MCF 10A (cell line): ENCODE measurements at regions of chr11 and their contacts with region 1.

Region 1: GRCh38 chr11:65817835-65818742 is 15.7 kb upstream of the SNX32 start:
- DNase-seq: peak; percentile 81
- H3K4me3 Mint-ChIP-seq: peak overlapping the region; percentile 80
- H3K27ac Mint-ChIP-seq: peak overlapping the region; percentile 78
- H3K4me1 Mint-ChIP-seq: peaks cover 4% of the 10 kb centered on the region
- H3K27me3 Mint-ChIP-seq: no peaks in the 10 kb centered on the region
- CTCF ChIP-seq: peak; percentile 99

Region 2: GRCh38 chr11:65652511-65653231 is 165.4 kb before region 1 on chr11:
- CTCF ChIA-PET with region 1: no interaction called
- POLR2A ChIA-PET with region 1: no interaction called
- intact Hi-C with region 1: no loop called
- DNase-seq: peak; percentile 89
- H3K4me3 Mint-ChIP-seq: peak overlapping the region; percentile 78
- H3K27ac Mint-ChIP-seq: peak overlapping the region; percentile 95
- H3K4me1 Mint-ChIP-seq: peaks cover 29% of the 10 kb centered on the region
- H3K27me3 Mint-ChIP-seq: no peaks in the 10 kb centered on the region
- CTCF ChIP-seq: no peak

Region 3: DNA sequence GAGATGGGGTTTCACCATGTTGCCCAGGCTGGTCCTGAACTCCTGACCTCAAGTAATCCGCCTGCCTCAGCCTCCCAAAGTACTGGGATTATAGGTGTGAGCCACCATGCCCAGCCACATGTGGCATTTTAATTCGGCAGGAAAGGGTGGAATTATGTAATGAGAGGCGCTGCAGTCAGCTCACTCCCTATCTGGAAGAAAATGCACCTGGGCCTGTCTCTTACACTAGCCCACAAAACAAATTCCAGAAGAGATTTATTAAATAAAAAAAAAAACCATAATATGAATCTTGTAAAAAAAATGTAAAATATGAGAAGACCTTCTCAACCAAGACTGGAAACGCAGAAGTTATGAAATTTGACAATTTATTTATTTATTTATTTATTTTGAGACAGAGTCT is 114.2 kb before region 1 on chr11:
- CTCF ChIA-PET with region 1: interaction called, 41 read pairs
- POLR2A ChIA-PET with region 1: no interaction called
- intact Hi-C with region 1: loop called (anchors 1 kb)
- DNase-seq: no peak
- H3K4me3 Mint-ChIP-seq: no peak overlapping the region
- H3K27ac Mint-ChIP-seq: no peak overlapping the region
- H3K4me1 Mint-ChIP-seq: no peaks in the 10 kb centered on the region
- H3K27me3 Mint-ChIP-seq: peaks cover 44% of the 10 kb centered on the region
- CTCF ChIP-seq: no peak

Region 4: GRCh38 chr11:65711785-65712632 is 106.1 kb before region 1 on chr11 and contains the start of gene KAT5:
- CTCF ChIA-PET with region 1: interaction called, 69 read pairs
- POLR2A ChIA-PET with region 1: interaction called, 42 read pairs
- intact Hi-C with region 1: loop called (anchors 1 kb)
- DNase-seq: peak; percentile 98
- H3K4me3 Mint-ChIP-seq: peak within 1 kb of the TSS; percentile 80
- H3K27ac Mint-ChIP-seq: peak within 1 kb of the TSS; percentile 99
- H3K4me1 Mint-ChIP-seq: no peaks in the 10 kb centered on the region
- H3K27me3 Mint-ChIP-seq: no peaks in the 10 kb centered on the region
- CTCF ChIP-seq: peak; percentile 95
- total RNA-seq, gene KAT5: 37.6 and 48.1 TPM in 2 replicates

Region 5: GRCh38 chr11:65720237-65720934 is 97.7 kb before region 1 on chr11 and contains the start of gene RNASEH2C:
- CTCF ChIA-PET with region 1: interaction called, 69 read pairs
- POLR2A ChIA-PET with region 1: interaction called, 11 read pairs
- intact Hi-C with region 1: no loop called
- DNase-seq: peak; percentile 86
- H3K4me3 Mint-ChIP-seq: peak within 1 kb of the TSS; percentile 97
- H3K27ac Mint-ChIP-seq: peak within 1 kb of the TSS; percentile 75
- H3K4me1 Mint-ChIP-seq: peaks cover 10% of the 10 kb centered on the region
- H3K27me3 Mint-ChIP-seq: no peaks in the 10 kb centered on the region
- CTCF ChIP-seq: no peak
- total RNA-seq, gene RNASEH2C: 27.4 and 35.7 TPM in 2 replicates

Region 6: DNA sequence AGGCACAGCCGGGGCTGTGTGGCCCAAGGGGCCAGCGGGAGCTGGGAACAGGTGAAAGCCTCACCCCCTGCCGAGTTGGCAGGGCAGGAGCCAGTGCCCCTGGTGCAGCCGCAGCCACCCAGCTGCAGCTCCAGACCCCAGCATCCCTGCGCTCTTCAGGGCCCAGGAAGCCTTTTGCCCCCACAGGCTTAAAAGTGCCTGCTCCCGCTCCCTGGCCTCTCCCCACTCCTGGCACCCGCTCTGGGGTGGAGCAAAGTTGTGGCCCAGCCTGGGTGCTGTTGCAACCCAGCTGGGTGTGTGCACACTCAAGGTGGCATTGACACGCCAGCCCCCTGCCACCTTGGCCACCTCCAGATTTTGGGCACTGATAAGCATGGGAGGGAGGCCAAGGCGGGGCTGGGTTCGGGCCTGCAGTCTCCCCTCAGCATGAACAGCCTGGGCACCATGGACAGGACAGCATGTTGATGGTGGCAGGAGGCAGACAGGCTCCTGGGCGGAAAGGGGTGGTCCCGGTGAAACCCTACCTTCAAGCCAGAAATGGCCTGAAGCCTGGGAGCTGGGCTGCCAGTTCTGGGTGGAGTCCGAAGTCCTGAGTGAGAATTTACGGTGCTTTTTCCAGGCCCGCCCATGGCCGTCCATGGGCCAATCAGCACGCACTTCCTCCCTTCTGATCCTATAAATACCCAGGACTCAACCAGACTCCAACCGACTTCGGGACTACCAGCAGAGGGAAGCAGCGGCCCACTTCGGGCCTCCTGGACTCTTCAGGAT is 74.0 kb before region 1 on chr11:
- CTCF ChIA-PET with region 1: interaction called, 18 read pairs
- POLR2A ChIA-PET with region 1: interaction called, 7 read pairs
- intact Hi-C with region 1: no loop called
- DNase-seq: peak; percentile 73
- H3K4me3 Mint-ChIP-seq: no peak overlapping the region
- H3K27ac Mint-ChIP-seq: no peak overlapping the region
- H3K4me1 Mint-ChIP-seq: no peaks in the 10 kb centered on the region
- H3K27me3 Mint-ChIP-seq: peaks cover 38% of the 10 kb centered on the region
- CTCF ChIP-seq: no peak

Region 7: DNA sequence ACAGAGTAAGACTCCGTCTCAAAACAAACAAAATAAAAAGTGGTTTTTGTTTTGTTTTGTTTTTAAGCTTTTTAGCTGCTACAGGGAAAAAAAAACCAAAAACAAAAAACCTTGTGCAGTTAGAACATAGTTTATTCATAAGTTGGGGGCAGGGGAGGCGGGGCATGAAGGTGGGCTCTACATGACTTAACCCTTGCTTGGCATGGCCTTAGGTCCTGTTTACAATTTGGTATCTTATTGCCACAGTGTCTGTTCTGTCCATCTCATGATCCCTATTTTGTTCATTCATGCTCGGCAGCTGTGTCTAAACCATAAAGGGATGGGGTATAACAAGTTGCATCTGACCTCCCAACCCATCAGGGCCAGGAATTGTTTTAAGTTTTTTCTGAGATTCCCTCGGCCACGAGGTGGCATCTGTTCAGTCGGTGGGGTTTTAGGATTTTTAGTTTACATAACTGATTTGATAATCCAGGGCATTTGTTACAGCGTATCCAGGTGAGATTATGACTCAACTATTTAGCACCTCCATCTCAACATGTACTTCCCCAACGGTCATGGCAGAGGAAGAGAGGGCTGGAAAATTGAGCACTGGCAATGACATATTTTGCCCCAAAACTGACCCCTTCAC is 44.2 kb before region 1 on chr11:
- CTCF ChIA-PET with region 1: interaction called, 98 read pairs
- POLR2A ChIA-PET with region 1: interaction called, 39 read pairs
- intact Hi-C with region 1: no loop called
- DNase-seq: no peak
- H3K4me3 Mint-ChIP-seq: no peak overlapping the region
- H3K27ac Mint-ChIP-seq: no peak overlapping the region
- H3K4me1 Mint-ChIP-seq: peaks cover 18% of the 10 kb centered on the region
- H3K27me3 Mint-ChIP-seq: no peaks in the 10 kb centered on the region
- CTCF ChIP-seq: no peak

Region 8: GRCh38 chr11:65791691-65792213 is 26.3 kb before region 1 on chr11:
- CTCF ChIA-PET with region 1: interaction called, 9 read pairs
- POLR2A ChIA-PET with region 1: interaction called, 17 read pairs
- intact Hi-C with region 1: no loop called
- DNase-seq: no peak
- H3K4me3 Mint-ChIP-seq: no peak overlapping the region
- H3K27ac Mint-ChIP-seq: no peak overlapping the region
- H3K4me1 Mint-ChIP-seq: peaks cover 7% of the 10 kb centered on the region
- H3K27me3 Mint-ChIP-seq: peaks cover 13% of the 10 kb centered on the region
- CTCF ChIP-seq: no peak

Region 9: DNA sequence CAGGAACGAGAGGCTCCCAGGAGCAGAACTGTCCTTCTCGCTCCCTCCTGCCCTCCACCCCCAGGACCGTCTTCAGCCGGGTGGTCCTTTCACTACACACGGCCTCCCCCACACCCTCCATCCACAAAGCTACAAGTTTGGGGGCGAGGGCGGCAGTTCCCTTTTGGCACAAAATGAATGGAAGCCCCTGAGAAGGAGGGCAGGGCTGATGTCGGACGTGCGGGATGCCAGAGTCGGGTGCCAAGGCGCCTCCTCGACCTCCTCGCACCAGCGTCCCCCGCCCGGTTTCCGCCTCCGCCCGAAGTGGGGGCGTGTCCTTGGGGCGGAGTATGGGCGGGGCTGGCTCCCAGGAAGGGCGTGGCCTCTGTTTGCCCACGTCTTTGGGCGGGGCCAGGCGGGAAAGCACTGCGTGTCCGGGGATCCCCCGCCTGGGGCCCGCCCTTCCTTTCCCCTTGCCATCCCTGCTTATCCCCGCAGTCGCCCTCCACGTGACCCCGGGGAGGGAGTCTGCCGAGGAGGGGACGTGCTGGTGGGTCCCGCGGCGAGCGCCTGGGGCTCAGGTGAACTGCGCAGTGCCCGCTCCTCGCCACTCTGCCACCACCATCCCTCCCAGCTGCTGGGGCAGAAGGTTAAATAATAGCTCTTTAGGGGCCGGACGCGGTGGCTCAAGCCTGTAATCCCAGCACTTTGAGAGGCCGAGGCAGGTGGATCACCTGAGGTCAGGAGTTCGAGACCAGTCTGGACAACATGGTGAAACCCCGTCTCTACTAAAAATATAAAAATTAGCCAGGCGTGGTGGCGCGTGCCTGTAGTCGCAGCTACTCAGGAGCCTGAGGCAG is 55.4 kb after region 1 on chr11:
- CTCF ChIA-PET with region 1: no interaction called
- POLR2A ChIA-PET with region 1: no interaction called
- intact Hi-C with region 1: no loop called
- DNase-seq: peak; percentile 92
- H3K4me3 Mint-ChIP-seq: peak overlapping the region; percentile 78
- H3K27ac Mint-ChIP-seq: peak overlapping the region; percentile 87
- H3K4me1 Mint-ChIP-seq: peaks cover 7% of the 10 kb centered on the region
- H3K27me3 Mint-ChIP-seq: no peaks in the 10 kb centered on the region
- CTCF ChIP-seq: no peak

Region 10: DNA sequence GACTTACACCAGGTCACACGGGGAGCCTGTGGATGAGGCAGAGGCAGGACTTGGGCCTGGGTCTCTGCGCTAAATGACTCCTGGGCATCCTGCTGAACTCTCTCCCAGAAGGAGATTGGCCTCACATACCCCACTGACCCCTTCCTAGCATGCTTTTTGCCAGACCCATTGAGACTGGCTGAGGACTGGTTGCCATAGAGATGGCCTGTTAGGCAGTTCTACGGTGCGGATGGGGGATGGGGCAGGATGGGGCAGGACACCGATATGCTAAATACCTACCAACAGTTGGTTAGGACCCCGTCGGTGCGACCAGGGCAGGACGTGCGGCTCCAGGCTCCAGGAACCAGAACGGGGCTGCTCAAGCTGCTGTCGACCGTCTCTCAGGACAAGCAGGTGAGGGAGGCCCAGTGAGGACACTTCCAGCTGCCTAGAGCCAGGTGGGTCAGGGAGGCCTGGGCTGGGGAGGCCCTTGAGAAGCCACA is 127.4 kb after region 1 on chr11 and contains the start of gene TSGA10IP:
- CTCF ChIA-PET with region 1: no interaction called
- POLR2A ChIA-PET with region 1: no interaction called
- intact Hi-C with region 1: no loop called
- DNase-seq: no peak
- H3K4me3 Mint-ChIP-seq: no peak within 1 kb of the TSS
- H3K27ac Mint-ChIP-seq: no peak within 1 kb of the TSS
- H3K4me1 Mint-ChIP-seq: peaks cover 9% of the 10 kb centered on the region
- H3K27me3 Mint-ChIP-seq: peaks cover 10% of the 10 kb centered on the region
- CTCF ChIP-seq: no peak
- total RNA-seq, gene TSGA10IP: not detected in 2 replicates